Activated T-helper 1 cell treated with anti-CD3 and anti-CD28 coated beads, Interleukin-12 subunit alpha, Interleukin-12 subunit beta, Interleukin-2, Interleukin-4 antibody, amounts not matched to agents 30 ng/mL and 10 ng/mL and 1 ng/mL, durations not matched to agents 14 hours and 24 hours and 36 hours (primary cell): ENCODE measurements at regions of chr6 and their contacts with region 1.

Region 1: DNA sequence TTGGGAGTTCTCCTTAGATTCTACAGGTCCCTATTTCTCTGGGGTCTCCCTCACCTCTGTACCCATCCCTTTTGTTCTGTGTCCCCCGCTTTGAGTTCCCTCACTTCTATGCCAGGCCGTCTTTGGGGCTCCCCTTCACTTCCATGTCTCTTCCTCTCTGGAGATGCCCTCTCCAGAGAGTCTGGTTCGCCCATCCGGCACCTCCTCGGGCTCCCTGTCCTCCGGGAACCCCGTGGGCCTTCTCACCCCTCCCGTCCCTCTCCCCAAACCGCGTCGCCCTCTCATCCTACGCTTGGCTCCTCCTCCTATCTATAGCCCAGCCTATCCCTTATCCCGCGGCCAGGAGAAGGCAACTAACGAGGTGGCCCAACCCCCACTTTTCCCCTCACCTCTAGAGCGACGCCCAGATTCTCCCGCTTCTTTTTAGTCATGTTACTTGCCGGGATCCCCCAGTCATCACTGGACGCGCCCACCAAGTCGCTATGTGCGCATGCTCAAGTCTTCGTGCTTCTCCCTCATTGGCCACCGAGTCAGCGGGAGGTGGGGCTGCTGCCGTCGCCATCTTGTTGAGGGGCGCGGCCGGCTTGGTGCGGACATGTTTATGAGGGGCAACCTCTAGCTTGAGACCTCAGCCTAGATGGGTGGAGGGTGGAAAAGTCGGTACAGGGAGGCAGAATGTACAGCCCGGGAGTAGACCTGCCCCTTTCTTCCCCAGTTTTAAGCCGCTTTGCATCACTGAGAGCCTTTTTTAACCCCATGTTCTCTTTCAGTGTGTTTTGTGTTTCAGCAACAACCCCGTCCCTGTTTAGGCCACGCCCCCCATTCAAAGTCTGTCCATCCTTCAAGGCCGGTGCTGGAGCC is at the start of gene CCDC167:
- DNase-seq: peak; percentile 96
- H3K4me3 Mint-ChIP-seq: peak within 1 kb of the TSS; percentile 91
- H3K27ac Mint-ChIP-seq: peak within 1 kb of the TSS; percentile 92
- H3K4me1 Mint-ChIP-seq: peaks cover 79% of the 10 kb centered on the region
- H3K27me3 Mint-ChIP-seq: no peaks in the 10 kb centered on the region
- total RNA-seq, gene CCDC167: 66.6 and 72.4 TPM in 2 replicates

Region 2: GRCh38 chr6:37257634-37258404 is 241.8 kb before region 1 on chr6 and contains the starts of genes TBC1D22B and TMEM217:
- intact Hi-C with region 1: loop called (anchors 1 kb)
- DNase-seq: peak; percentile 95
- H3K4me3 Mint-ChIP-seq: peak within 1 kb of the TSS; percentile 97
- H3K27ac Mint-ChIP-seq: peak within 1 kb of the TSS; percentile 100
- H3K4me1 Mint-ChIP-seq: peaks cover 78% of the 10 kb centered on the region
- H3K27me3 Mint-ChIP-seq: no peaks in the 10 kb centered on the region
- total RNA-seq, gene TBC1D22B: 20.8 and 21.2 TPM in 2 replicates
- total RNA-seq, gene TMEM217: 7.7 and 9.9 TPM in 2 replicates

Region 3: DNA sequence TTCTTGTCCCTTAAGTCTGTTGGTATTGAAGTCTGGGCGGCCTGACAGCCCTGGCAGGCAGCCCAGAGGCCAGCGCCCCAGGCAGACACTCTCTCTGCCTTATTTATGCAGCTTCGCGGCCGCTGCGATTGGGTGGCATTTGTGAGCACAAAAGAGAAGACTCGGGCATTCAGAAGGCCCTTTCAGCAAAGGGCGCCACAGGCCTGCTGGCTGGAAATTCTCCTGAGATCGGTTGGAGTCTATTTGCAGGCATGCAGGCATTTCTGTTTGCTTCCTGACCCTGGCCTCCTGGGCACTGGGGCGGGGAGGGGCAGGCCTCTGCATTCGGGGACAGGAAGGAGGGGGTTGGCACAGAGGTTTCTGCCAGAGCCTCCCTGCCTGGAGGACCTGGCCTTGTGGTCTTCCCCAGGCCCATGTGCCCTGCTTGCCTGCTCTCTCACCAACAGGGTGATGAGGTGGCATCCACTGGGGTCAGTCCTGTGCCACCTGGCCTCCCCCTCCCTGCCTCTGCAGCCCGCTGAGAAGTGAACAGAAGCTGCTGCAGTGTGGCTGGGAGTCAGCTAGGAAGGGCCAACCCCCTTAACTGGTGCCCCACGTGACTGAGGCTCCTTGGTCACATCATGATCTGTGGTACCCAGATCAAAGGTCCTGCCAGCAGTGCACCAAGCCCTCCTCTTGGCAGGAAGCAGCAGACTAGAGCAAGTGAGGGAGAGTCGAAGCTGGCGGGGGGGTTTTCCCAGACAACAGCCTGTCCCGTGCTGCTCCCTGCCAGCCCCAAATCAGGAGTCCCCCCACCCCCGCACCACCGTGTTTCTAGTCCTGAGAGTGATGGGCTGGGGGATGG is 16.6 kb after region 1 on chr6:
- intact Hi-C with region 1: loop called (anchors 1 kb)
- DNase-seq: peak; percentile 81
- H3K4me3 Mint-ChIP-seq: peak overlapping the region; percentile 75
- H3K27ac Mint-ChIP-seq: peak overlapping the region; percentile 92
- H3K4me1 Mint-ChIP-seq: peaks cover 57% of the 10 kb centered on the region
- H3K27me3 Mint-ChIP-seq: peaks cover 9% of the 10 kb centered on the region

Region 4: GRCh38 chr6:37550191-37550965 is 50.7 kb after region 1 on chr6:
- intact Hi-C with region 1: loop called (anchors 1 kb)
- DNase-seq: no peak
- H3K4me3 Mint-ChIP-seq: no peak overlapping the region
- H3K27ac Mint-ChIP-seq: no peak overlapping the region
- H3K4me1 Mint-ChIP-seq: peaks cover 41% of the 10 kb centered on the region
- H3K27me3 Mint-ChIP-seq: peaks cover 11% of the 10 kb centered on the region

Region 5: DNA sequence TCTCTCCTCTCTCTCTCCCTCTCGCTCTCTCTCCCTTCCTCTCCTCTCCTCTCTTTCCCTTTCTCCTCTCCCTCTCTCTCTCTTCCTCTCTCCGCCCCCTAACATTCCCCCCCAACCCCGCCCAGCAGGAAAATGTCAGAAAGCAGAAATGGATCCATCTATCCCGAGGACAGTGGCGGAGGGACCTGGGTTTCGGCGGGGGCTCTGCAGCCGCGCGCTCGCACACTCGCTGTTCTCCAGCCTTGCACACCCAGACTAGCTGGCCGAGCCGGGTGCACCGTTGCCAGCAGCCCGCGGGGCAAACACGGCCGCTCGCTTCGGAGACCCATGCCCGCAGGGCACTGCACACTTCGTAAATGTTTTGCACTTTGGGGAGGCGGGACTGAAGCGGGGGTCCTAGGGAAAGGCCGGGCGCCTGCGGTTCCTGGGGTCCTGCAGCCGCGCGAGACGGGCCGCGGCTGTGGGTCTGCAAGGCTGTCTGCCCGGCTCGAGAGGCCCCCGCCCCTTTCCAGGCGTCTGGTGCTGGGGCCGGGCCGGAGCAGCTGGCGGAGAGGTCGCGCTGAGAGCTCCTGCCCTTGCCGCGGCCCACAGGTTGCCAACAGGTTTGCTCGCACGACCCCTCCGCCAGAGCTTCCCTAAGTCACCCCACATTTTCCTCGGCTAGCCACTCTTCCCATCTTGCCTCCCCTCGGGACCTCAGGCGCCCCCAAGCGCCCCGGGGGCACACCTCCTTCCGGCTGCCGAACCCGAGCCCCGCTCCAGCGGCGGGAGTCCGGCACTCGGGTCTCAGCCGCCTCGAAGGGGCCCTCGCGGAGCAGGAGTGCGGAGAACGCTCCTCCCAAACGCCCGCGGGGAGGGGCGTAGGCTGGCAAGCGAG is 198.8 kb after region 1 on chr6:
- intact Hi-C with region 1: loop called (anchors 1 kb)
- DNase-seq: peak; percentile 58
- H3K4me3 Mint-ChIP-seq: peak overlapping the region; percentile 91
- H3K27ac Mint-ChIP-seq: peak overlapping the region; percentile 91
- H3K4me1 Mint-ChIP-seq: peaks cover 28% of the 10 kb centered on the region
- H3K27me3 Mint-ChIP-seq: peaks cover 34% of the 10 kb centered on the region

Region 6: DNA sequence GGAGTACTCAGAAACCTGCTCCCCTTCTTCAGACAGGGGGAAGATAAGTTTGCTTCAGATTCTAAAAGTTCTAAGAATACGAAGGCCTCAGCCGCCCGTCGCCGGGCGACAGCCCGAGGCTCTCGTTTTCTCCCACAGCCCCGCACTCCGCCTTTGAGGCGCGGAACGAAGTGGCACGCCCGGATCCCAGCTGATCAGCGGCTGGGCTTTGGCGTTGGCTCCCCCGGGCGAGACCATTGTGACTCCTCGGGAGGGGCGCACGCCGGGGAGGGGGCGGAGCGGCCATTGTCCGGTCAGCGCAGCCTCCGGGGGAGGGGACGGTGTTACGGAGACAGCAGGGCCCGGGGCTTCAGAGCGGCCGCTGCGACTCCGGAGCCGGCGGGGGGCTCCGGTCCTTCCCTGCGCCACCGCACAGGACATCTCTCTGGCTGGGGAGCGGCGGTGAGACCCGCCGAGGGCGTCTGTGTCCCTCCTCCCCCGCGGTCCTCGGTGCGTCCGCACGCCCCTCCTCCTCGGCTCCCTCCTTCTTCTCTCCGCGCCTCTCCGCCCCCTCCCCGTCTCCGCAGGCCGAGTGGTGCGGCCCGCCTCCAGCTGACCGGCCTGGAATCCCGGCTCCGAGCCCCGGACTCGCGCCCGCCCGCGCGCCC is 319.6 kb after region 1 on chr6 and contains the start of gene ZFAND3:
- intact Hi-C with region 1: loop called (anchors 5 kb)
- DNase-seq: peak; percentile 93
- H3K4me3 Mint-ChIP-seq: peak within 1 kb of the TSS; percentile 95
- H3K27ac Mint-ChIP-seq: peak within 1 kb of the TSS; percentile 97
- H3K4me1 Mint-ChIP-seq: peaks cover 52% of the 10 kb centered on the region
- H3K27me3 Mint-ChIP-seq: peaks cover 9% of the 10 kb centered on the region
- total RNA-seq, gene ZFAND3: 36.9 and 44.1 TPM in 2 replicates

Region 7: GRCh38 chr6:38639498-38640215 is 1140.0 kb after region 1 on chr6 and contains the start of gene BTBD9:
- intact Hi-C with region 1: loop called (anchors 5 kb)
- DNase-seq: peak; percentile 80
- H3K4me3 Mint-ChIP-seq: peak within 1 kb of the TSS; percentile 92
- H3K27ac Mint-ChIP-seq: peak within 1 kb of the TSS; percentile 91
- H3K4me1 Mint-ChIP-seq: peaks cover 47% of the 10 kb centered on the region
- H3K27me3 Mint-ChIP-seq: no peaks in the 10 kb centered on the region
- total RNA-seq, gene BTBD9: 14.5 and 16.4 TPM in 2 replicates